GM12878 (cell line): ENCODE measurements at regions of chr1 and their contacts with region 1.

Region 1: DNA sequence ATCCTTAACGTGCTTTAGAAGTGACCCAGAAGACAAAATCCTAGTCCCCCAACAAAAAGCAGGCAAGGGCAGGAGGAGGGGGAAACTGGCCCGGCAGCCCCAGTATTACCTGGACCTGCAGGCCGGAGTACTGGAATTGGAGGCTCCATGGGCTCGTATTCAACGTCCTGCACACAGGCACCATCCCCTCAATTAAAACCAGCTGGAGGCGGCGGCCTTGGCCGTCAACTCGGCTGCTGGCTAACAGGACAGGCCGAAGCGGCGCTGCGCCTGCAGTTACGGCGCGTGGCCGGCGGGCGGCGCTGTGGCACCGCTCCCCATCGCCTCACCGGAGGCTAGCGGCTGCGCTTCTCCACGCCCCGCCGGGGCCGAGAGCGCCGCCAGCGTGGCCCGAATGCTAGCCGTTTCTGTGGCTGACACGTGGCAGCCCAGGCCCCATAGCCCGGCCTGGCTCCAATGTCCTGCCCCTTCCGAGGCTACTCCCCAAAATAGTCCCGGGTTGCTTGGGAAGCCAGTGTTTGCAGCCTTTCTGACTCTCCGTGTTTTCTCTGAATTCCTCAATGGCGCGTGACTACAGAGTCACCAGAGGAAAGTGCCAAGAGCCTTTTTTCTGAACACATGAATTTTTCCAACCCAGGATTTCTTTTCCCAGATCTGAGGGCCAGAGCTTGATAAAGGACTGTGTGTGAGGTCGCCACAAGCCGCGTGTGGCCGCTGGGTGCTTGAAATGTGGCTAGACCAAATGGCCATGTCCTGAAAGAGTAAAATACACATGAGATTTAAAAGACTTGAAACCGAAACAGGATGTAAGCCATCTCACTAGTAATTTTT is 82.5 kb downstream of the HHIPL2 start:
- DNase-seq: peak; percentile 57
- ATAC-seq: peak; percentile 98
- H3K4me3 ChIP-seq: peak overlapping the region; percentile 68; the same call in 1 of the 2 replicates
- H3K27ac ChIP-seq: peak overlapping the region; percentile 62
- H3K4me1 ChIP-seq: no peaks in the 10 kb centered on the region
- H3K27me3 ChIP-seq: peaks cover 2 to 5% of the 10 kb centered on the region in 2 experiments; a peak in 2 of 4 replicates
- CTCF ChIP-seq: peak; percentile 96 to 99 (median 96)
- EP300 ChIP-seq: no peak
- POLR2A ChIP-seq: peak; percentile 47; the same call in 1 of the 2 replicates
- RAD21 ChIP-seq: peak; percentile 73

Region 2: GRCh38 chr1:222357252-222357651 is 108.2 kb before region 1 on chr1:
- CTCF ChIA-PET with region 1: no interaction called
- POLR2A ChIA-PET with region 1: no interaction called
- RAD21 ChIA-PET with region 1: no interaction called
- SMC1A ChIA-PET with region 1: no interaction called
- in situ Hi-C with region 1: no loop called
- intact Hi-C with region 1: no loop called
- DNase-seq: no peak
- ATAC-seq: no peak
- H3K4me3 ChIP-seq: no peak overlapping the region
- H3K27ac ChIP-seq: no peak overlapping the region
- H3K4me1 ChIP-seq: no peaks in the 10 kb centered on the region
- H3K27me3 ChIP-seq: no peaks in the 10 kb centered on the region
- CTCF ChIP-seq: no peak
- EP300 ChIP-seq: no peak
- POLR2A ChIP-seq: no peak
- RAD21 ChIP-seq: no peak

Region 3: DNA sequence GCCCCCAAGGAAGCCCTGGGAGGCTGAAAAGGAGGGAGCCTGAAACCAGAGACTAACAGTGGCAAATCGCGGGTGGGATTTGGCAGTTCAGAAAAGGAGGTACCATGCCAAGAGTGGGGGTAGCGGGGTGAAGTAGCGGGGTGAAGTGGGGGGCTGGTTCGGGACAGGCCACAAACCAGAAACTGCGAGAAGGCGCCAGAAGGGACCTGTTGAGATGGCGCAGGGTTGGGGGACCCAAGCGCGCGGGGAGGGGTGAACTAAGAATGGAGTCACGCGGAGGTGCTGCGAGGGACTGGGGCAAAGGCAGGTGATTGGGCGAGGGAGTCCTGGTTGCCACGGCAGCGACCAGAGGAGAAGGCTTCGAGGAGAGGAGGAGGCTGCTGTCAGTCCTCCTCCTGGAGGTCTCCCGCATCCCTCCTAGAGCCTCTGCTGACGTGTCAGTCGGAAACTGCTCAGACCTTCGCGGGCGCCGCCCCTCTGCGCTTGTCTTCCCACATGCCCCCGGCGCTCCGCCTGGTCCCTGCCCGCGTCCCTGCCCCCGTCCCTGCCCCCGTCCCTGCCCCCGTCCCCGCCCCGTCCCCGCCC is 152.0 kb after region 1 on chr1:
- CTCF ChIA-PET with region 1: interaction called, 10 read pairs
- POLR2A ChIA-PET with region 1: no interaction called
- RAD21 ChIA-PET with region 1: interaction called, 4 read pairs
- SMC1A ChIA-PET with region 1: interaction called, 4 read pairs
- in situ Hi-C with region 1: no loop called
- intact Hi-C with region 1: no loop called
- DNase-seq: peak; percentile 61
- ATAC-seq: peak; percentile 87
- H3K4me3 ChIP-seq: peak overlapping the region; percentile 67
- H3K27ac ChIP-seq: peak overlapping the region; percentile 23
- H3K4me1 ChIP-seq: peaks cover 7% of the 10 kb centered on the region; the same call in 1 of the 2 replicates
- H3K27me3 ChIP-seq: no peaks in the 10 kb centered on the region; a peak in 1 of 4 replicates
- CTCF ChIP-seq: no peak
- EP300 ChIP-seq: no peak
- POLR2A ChIP-seq: peak; percentile 76
- RAD21 ChIP-seq: no peak

Region 4: GRCh38 chr1:222643938-222644635 is 178.7 kb after region 1 on chr1:
- CTCF ChIA-PET with region 1: interaction called, 11 read pairs
- POLR2A ChIA-PET with region 1: no interaction called
- RAD21 ChIA-PET with region 1: interaction called, 4 read pairs
- SMC1A ChIA-PET with region 1: interaction called, 6 read pairs
- in situ Hi-C with region 1: no loop called
- intact Hi-C with region 1: no loop called
- DNase-seq: peak; percentile 85
- ATAC-seq: peak; percentile 97
- H3K4me3 ChIP-seq: peak overlapping the region; percentile 92
- H3K27ac ChIP-seq: peak overlapping the region; percentile 91
- H3K4me1 ChIP-seq: 0 out of 2 replicates have a peak, but pooled peaks cover 4% of the 10 kb centered on the region
- H3K27me3 ChIP-seq: no peaks in the 10 kb centered on the region
- CTCF ChIP-seq: no peak
- EP300 ChIP-seq: 0 out of 4 replicates have a peak, but pooled peaks of 1 of the 2 experiments have one; percentile 21
- POLR2A ChIP-seq: peak; percentile 78
- RAD21 ChIP-seq: no peak

Region 5: GRCh38 chr1:222739465-222739864 is 274.0 kb after region 1 on chr1:
- CTCF ChIA-PET with region 1: interaction called, 10 read pairs
- POLR2A ChIA-PET with region 1: no interaction called
- RAD21 ChIA-PET with region 1: interaction called, 5 read pairs
- SMC1A ChIA-PET with region 1: no interaction called
- in situ Hi-C with region 1: no loop called
- intact Hi-C with region 1: no loop called
- DNase-seq: no peak
- ATAC-seq: no peak
- H3K4me3 ChIP-seq: no peak overlapping the region
- H3K27ac ChIP-seq: no peak overlapping the region
- H3K4me1 ChIP-seq: no peaks in the 10 kb centered on the region
- H3K27me3 ChIP-seq: no peaks in the 10 kb centered on the region
- CTCF ChIP-seq: no peak
- EP300 ChIP-seq: no peak
- POLR2A ChIP-seq: no peak
- RAD21 ChIP-seq: no peak

Region 6: DNA sequence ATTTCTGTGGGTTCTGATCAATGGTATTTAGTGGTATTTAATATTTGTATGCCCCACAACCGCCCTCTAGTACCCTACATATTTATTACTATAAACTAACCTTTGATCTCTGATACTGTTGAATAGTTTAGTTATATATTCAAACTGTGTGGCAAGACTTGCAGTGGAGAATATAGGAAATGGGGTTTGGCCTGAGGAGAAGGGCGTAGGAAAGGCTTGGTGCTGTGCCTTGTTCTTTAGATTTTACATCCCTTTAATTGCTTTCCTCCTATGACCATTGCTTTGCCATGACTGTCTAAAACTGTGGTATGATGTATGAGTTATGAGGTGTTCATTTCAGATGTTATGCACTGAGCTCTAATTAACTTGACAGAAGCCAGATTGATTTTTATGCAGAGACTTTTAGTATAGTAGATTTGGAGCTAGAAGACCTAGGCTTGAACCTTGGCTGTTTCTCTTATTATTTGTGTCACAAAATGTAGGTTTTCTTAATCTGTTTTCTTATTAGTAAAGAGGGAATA is 368.0 kb after region 1 on chr1:
- CTCF ChIA-PET with region 1: no interaction called
- POLR2A ChIA-PET with region 1: no interaction called
- RAD21 ChIA-PET with region 1: no interaction called
- SMC1A ChIA-PET with region 1: no interaction called
- in situ Hi-C with region 1: no loop called
- intact Hi-C with region 1: no loop called
- DNase-seq: no peak
- ATAC-seq: no peak
- H3K4me3 ChIP-seq: no peak overlapping the region
- H3K27ac ChIP-seq: no peak overlapping the region
- H3K4me1 ChIP-seq: no peaks in the 10 kb centered on the region
- H3K27me3 ChIP-seq: no peaks in the 10 kb centered on the region
- CTCF ChIP-seq: no peak
- EP300 ChIP-seq: no peak
- POLR2A ChIP-seq: no peak
- RAD21 ChIP-seq: no peak

Region 7: GRCh38 chr1:223081181-223081994 is 616.0 kb after region 1 on chr1:
- CTCF ChIA-PET with region 1: interaction called, 7 read pairs
- POLR2A ChIA-PET with region 1: no interaction called
- RAD21 ChIA-PET with region 1: no interaction called
- SMC1A ChIA-PET with region 1: no interaction called
- in situ Hi-C with region 1: loop called (anchors 5 kb)
- intact Hi-C with region 1: loop called (anchors 1 kb)
- DNase-seq: peak; percentile 11
- ATAC-seq: peak; percentile 99
- H3K4me3 ChIP-seq: peak overlapping the region; percentile 16; the same call in 1 of the 2 replicates
- H3K27ac ChIP-seq: no peak overlapping the region
- H3K4me1 ChIP-seq: no peaks in the 10 kb centered on the region
- H3K27me3 ChIP-seq: no peaks in the 10 kb centered on the region; a peak in 1 of 4 replicates
- CTCF ChIP-seq: peak; percentile 76 to 94 (median 93); a peak in 5 of 6 replicates
- EP300 ChIP-seq: no peak
- POLR2A ChIP-seq: no peak
- RAD21 ChIP-seq: peak; percentile 85